ENCODE measurements at regions of chr17 and their contacts with region 1.

Region 1: GRCh38 chr17:21239680-21240368 is 13.4 kb downstream of the NATD1 start:
- DNase-seq: no peak
- ATAC-seq: peak; percentile 45
- H3K4me3 Mint-ChIP-seq: no peak overlapping the region
- H3K27ac Mint-ChIP-seq: no peak overlapping the region
- H3K4me1 Mint-ChIP-seq: no peaks in the 10 kb centered on the region
- H3K27me3 Mint-ChIP-seq: peaks cover 5% of the 10 kb centered on the region
- CTCF ChIP-seq: no peak

Region 2: GRCh38 chr17:21119247-21119918 is 120.4 kb before region 1 on chr17:
- CTCF ChIA-PET with region 1: no interaction called
- POLR2A ChIA-PET with region 1: no interaction called
- intact Hi-C with region 1: loop called (anchors 1 kb)
- DNase-seq: peak; percentile 41
- ATAC-seq: peak; percentile 93
- H3K4me3 Mint-ChIP-seq: no peak overlapping the region
- H3K27ac Mint-ChIP-seq: no peak overlapping the region
- H3K4me1 Mint-ChIP-seq: peaks cover 6% of the 10 kb centered on the region
- H3K27me3 Mint-ChIP-seq: peaks cover 9% of the 10 kb centered on the region
- CTCF ChIP-seq: no peak

Region 3: DNA sequence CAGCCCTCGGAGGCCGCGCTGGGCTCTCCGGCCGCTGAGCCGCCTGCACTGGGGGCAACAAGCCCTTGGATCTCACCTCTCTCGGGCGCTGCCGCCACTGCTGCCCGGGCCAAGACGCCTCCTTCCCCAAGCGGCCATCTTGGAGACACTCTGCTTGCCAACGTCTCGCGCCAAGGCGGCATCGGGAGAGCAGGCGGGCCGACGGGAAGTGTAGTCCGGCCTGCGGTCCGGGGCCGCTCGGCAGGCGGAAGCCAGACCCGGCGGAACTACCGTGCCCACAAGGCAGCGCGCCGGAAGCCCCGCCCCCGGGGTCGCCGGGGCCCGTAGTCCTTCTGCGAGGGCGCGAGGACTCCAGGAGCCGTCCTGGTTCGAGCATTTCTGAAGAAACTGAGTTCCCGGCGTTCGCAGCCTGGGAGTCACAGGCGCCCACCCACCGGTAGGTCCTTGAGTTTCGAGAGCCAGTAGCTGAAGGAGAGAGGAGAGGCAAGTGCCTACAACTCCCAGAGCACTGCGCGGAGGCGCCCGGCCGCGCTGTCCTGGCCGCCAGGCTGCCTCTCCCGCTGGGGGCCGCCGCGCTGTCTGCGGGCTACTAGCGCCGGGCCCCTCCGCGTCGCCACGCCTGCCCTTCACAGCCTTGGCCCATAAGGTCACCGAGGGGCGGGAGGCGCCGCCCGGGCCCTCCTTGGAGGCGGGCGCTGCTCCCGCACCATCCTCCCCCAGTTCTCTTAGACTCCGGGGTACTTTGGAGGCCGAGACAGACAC is 25.6 kb before region 1 on chr17 and contains the start of gene TMEM11:
- CTCF ChIA-PET with region 1: no interaction called
- POLR2A ChIA-PET with region 1: no interaction called
- intact Hi-C with region 1: no loop called
- DNase-seq: peak; percentile 97
- ATAC-seq: peak; percentile 93
- H3K4me3 Mint-ChIP-seq: peak within 1 kb of the TSS; percentile 89
- H3K27ac Mint-ChIP-seq: peak within 1 kb of the TSS; percentile 90
- H3K4me1 Mint-ChIP-seq: peaks cover 48% of the 10 kb centered on the region
- H3K27me3 Mint-ChIP-seq: no peaks in the 10 kb centered on the region
- CTCF ChIP-seq: no peak
- total RNA-seq, gene TMEM11: 21.2 and 22.2 TPM in 2 replicates

Region 4: GRCh38 chr17:21508211-21508610 is 268.4 kb after region 1 on chr17:
- CTCF ChIA-PET with region 1: no interaction called
- POLR2A ChIA-PET with region 1: no interaction called
- intact Hi-C with region 1: no loop called
- DNase-seq: no peak
- ATAC-seq: no peak
- H3K4me3 Mint-ChIP-seq: no peak overlapping the region
- H3K27ac Mint-ChIP-seq: no peak overlapping the region
- H3K4me1 Mint-ChIP-seq: peaks cover 26% of the 10 kb centered on the region
- H3K27me3 Mint-ChIP-seq: peaks cover 21% of the 10 kb centered on the region
- CTCF ChIP-seq: no peak